Transverse colon (tissue), 4 donors: ENCODE measurements at regions of chr11 and their contacts with region 1.

Region 1: DNA sequence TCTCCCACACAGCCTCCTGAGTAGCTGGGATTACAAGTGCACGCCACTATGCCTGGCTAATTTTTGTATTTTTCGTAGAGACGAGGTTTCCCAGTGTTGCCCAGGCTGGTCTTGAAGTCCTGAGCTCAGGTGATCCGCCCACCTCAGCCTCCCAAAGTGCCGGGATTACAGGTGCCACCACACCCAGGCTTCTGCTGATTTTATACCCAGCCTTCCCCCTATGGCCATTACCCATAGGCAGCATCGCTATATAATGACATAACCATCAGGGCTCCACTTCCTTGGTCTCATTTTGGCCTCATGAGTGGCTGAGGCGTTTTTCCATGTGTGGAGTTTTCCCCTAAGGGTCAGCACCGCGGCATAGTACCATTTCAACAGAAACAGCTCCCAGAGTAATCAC is 60.6 kb upstream of the RAB1B start:
- DNase-seq: no peak
- H3K4me3 ChIP-seq: no peak overlapping the region
- H3K27ac ChIP-seq: no peak overlapping the region
- H3K4me1 ChIP-seq: no peaks in the 10 kb centered on the region
- H3K27me3 ChIP-seq: no peaks in the 10 kb centered on the region
- CTCF ChIP-seq: no peak
- EP300 ChIP-seq: no peak
- POLR2A ChIP-seq: no peak

Region 2: GRCh38 chr11:64713031-64713780 is 1494.7 kb before region 1 on chr11:
- in situ Hi-C with region 1: no loop called
- intact Hi-C with region 1: loop called (anchors 5 kb)
- DNase-seq: peak; percentile 26
- H3K4me3 ChIP-seq: peak overlapping the region in 2 of 4 donors; percentile 1 to 3
- H3K27ac ChIP-seq: no peak overlapping the region
- H3K4me1 ChIP-seq: peaks cover 0 to 13% (median 4%) of the 10 kb centered on the region in 4 donors
- H3K27me3 ChIP-seq: peaks cover 100% of the 10 kb centered on the region
- CTCF ChIP-seq: no peak
- EP300 ChIP-seq: no peak
- POLR2A ChIP-seq: no peak

Region 3: GRCh38 chr11:66429983-66430602 is 222.2 kb after region 1 on chr11:
- in situ Hi-C with region 1: no loop called
- intact Hi-C with region 1: loop called (anchors 5 kb)
- DNase-seq: peak; percentile 78
- H3K4me3 ChIP-seq: no peak overlapping the region
- H3K27ac ChIP-seq: no peak overlapping the region
- H3K4me1 ChIP-seq: no peaks in the 10 kb centered on the region
- H3K27me3 ChIP-seq: no peaks in the 10 kb centered on the region
- CTCF ChIP-seq: peak; percentile 78 to 89 (median 79)
- EP300 ChIP-seq: no peak
- POLR2A ChIP-seq: no peak